MCF 10A (cell line): ENCODE measurements at regions of chr15 and their contacts with region 1.

Region 1: DNA sequence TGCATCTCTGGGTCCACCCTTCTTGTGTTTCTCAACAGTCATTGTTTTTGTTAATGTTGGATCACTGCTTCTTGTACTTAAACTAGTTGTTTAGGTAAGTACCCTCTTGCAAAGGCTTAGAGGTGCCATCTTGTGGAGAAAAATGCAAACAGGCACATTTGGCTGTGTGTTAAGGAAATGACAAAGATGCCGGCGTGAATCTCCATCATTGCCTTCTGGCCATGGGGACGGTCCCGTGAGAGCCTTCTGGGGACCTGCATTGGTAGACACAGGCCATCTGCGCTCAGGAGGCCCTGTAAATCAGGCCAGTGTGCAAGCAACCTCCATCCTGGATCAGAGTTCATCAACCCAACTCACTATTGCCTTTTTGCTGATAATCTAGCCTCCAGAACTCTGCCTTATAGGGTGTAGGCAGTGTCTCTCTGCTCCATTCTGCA is 158.6 kb upstream of the NR2E3 start:
- DNase-seq: peak; percentile 78
- H3K4me3 Mint-ChIP-seq: no peak overlapping the region
- H3K27ac Mint-ChIP-seq: peak overlapping the region; percentile 75
- H3K4me1 Mint-ChIP-seq: peaks cover 12% of the 10 kb centered on the region
- H3K27me3 Mint-ChIP-seq: no peaks in the 10 kb centered on the region
- CTCF ChIP-seq: peak; percentile 68

Region 2: GRCh38 chr15:70974004-70974832 is 677.5 kb before region 1 on chr15:
- CTCF ChIA-PET with region 1: interaction called, 3 read pairs
- POLR2A ChIA-PET with region 1: no interaction called
- intact Hi-C with region 1: loop called (anchors 5 kb)
- DNase-seq: peak; percentile 52
- H3K4me3 Mint-ChIP-seq: no peak overlapping the region
- H3K27ac Mint-ChIP-seq: no peak overlapping the region
- H3K4me1 Mint-ChIP-seq: no peaks in the 10 kb centered on the region
- H3K27me3 Mint-ChIP-seq: no peaks in the 10 kb centered on the region
- CTCF ChIP-seq: peak; percentile 43

Region 3: DNA sequence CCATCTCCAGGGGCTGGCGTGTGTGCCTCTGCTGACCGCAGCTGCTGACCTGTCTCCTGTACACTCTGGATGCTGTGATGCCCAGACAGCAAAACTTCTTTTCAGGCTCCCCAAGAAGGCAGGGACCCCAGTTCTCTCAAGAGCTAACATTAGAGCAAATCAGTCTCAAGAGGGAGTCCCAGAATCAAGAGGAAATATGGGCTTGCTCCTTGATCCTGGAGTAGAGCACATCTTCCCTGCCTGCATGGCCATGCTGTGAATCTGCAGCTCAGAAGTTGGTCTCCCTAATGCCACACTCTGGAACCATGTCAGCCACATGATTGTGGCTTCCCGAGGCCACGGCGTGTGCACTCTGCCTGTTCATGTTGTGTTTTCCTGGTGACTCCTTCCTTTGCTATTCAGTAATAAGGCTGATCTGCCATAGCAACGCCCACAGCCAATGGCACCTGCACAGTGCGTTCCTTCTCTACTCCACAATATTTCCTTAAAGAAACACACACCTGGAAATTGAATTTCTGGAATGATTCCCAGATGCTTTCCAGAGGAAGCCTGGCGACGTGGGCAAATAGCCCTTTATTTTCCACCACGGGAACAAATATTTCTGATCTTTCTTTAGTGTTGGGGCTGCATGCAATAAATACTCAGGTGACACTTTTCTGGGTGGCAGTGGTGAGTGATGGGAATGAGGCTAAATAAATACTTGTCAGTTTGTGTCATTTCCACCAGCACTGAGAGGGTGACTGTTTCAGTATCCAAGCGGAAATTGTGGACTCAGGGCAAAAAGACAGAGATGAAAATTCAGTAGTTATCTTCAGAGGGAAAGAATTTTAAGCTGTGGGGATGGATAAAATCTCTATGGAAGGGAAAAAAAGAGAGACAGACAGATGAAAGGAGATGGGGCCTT is 558.4 kb before region 1 on chr15:
- CTCF ChIA-PET with region 1: no interaction called
- POLR2A ChIA-PET with region 1: no interaction called
- intact Hi-C with region 1: no loop called
- DNase-seq: peak; percentile 76
- H3K4me3 Mint-ChIP-seq: no peak overlapping the region
- H3K27ac Mint-ChIP-seq: peak overlapping the region; percentile 39
- H3K4me1 Mint-ChIP-seq: peaks cover 22% of the 10 kb centered on the region
- H3K27me3 Mint-ChIP-seq: no peaks in the 10 kb centered on the region
- CTCF ChIP-seq: no peak

Region 4: GRCh38 chr15:71448688-71449114 is 203.1 kb before region 1 on chr15:
- CTCF ChIA-PET with region 1: interaction called, 19 read pairs
- POLR2A ChIA-PET with region 1: interaction called, 4 read pairs
- intact Hi-C with region 1: loop called (anchors 1 kb)
- DNase-seq: peak; percentile 79
- H3K4me3 Mint-ChIP-seq: no peak overlapping the region
- H3K27ac Mint-ChIP-seq: peak overlapping the region; percentile 39
- H3K4me1 Mint-ChIP-seq: no peaks in the 10 kb centered on the region
- H3K27me3 Mint-ChIP-seq: no peaks in the 10 kb centered on the region
- CTCF ChIP-seq: peak; percentile 86

Region 5: GRCh38 chr15:71532994-71533393 is 118.8 kb before region 1 on chr15:
- CTCF ChIA-PET with region 1: interaction called, 34 read pairs
- POLR2A ChIA-PET with region 1: no interaction called
- intact Hi-C with region 1: loop called (anchors 1 kb)
- DNase-seq: peak; percentile 74
- H3K4me3 Mint-ChIP-seq: peak overlapping the region; percentile 24
- H3K27ac Mint-ChIP-seq: no peak overlapping the region
- H3K4me1 Mint-ChIP-seq: peaks cover 2% of the 10 kb centered on the region
- H3K27me3 Mint-ChIP-seq: no peaks in the 10 kb centered on the region
- CTCF ChIP-seq: peak; percentile 80

Region 6: DNA sequence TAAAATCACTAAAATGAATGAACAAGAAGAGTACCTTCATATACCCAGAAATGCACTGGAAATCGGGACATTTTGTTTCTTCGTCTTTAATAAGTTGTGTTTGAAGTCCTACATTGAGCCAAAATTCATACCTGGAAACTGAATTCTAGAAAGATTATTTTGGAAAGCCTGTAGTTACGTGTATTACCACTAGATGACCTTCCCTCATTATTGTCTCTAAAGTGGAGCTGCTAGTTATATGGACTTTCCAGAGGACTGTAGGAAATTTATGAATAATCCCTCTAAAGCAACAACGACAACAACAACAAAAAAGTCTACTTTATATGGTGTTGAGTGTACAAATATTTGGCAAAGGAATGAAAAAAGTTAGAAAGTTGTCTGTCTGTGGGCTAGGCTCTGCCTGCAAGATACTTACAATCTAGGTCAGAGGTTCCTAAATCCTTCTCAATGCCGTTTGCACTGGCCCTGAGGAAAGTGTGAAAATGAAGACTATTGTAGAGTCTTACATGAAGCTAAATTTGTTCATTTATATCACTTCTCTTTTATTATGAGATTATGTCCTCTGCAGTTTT is 76.2 kb before region 1 on chr15:
- CTCF ChIA-PET with region 1: interaction called, 73 read pairs
- POLR2A ChIA-PET with region 1: interaction called, 4 read pairs
- intact Hi-C with region 1: loop called (anchors 1 kb)
- DNase-seq: peak; percentile 23
- H3K4me3 Mint-ChIP-seq: no peak overlapping the region
- H3K27ac Mint-ChIP-seq: no peak overlapping the region
- H3K4me1 Mint-ChIP-seq: peaks cover 19% of the 10 kb centered on the region
- H3K27me3 Mint-ChIP-seq: no peaks in the 10 kb centered on the region
- CTCF ChIP-seq: peak; percentile 44